ENCODE measurements at regions of chr14 and their contacts with region 1.

Region 1: GRCh38 chr14:43647302-43647701 is 859.8 kb downstream of the FSCB start:
- DNase-seq: peak in 1 of 2 experiments; percentile 10
- H3K4me3 ChIP-seq: no peak overlapping the region
- H3K4me3 Mint-ChIP-seq: no peak overlapping the region
- H3K27ac Mint-ChIP-seq: no peak overlapping the region
- H3K4me1 ChIP-seq: peaks cover 12% of the 10 kb centered on the region
- H3K4me1 Mint-ChIP-seq: peaks cover 12% of the 10 kb centered on the region
- H3K27me3 ChIP-seq: no peaks in the 10 kb centered on the region
- H3K27me3 Mint-ChIP-seq: no peaks in the 10 kb centered on the region
- CTCF ChIP-seq: no peak

Region 2: DNA sequence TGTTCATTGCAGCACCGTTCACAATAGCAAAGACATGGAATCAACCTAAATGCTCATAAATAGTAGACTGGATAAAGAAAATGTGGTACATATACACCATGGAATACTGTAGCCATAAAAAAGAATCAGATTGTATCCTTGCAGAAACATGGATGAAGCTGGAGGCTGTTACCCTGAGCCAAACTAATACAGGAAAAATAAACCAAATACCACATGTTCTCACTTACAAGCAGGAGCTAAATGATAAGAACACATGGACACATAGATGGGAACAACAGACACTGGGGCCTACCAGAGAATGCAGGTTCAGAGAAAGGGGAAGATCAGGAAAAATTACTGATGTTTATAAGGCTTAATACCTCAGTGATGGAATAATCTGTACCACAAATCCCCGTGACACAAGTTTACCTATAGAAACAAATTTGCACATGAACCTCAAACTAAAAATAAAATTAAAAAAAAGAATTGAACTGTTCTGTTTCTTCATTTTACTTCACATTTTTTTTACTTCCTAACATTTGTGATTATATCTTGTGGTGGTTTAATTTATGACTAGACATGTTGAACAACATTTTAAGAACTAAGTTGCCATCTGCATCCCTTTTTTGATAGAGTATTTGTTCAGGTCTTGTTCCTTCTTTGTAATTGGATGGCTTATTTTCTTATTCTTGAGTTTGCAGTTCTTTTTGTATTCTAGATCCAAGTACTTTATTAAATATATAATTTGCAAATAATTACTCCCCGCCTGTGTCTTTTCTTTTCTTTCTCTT is 24.6 kb after region 1 on chr14:
- CTCF ChIA-PET with region 1: no interaction called
- POLR2A ChIA-PET with region 1: no interaction called
- intact Hi-C with region 1: loop called (anchors 1 kb)
- DNase-seq: no peak
- H3K4me3 ChIP-seq: no peak overlapping the region
- H3K4me3 Mint-ChIP-seq: no peak overlapping the region
- H3K27ac Mint-ChIP-seq: no peak overlapping the region
- H3K4me1 ChIP-seq: no peaks in the 10 kb centered on the region
- H3K4me1 Mint-ChIP-seq: no peaks in the 10 kb centered on the region
- H3K27me3 ChIP-seq: no peaks in the 10 kb centered on the region
- H3K27me3 Mint-ChIP-seq: no peaks in the 10 kb centered on the region
- CTCF ChIP-seq: no peak

Region 3: GRCh38 chr14:43778686-43779639 is 131.7 kb after region 1 on chr14:
- CTCF ChIA-PET with region 1: interaction called, 3 read pairs
- POLR2A ChIA-PET with region 1: no interaction called
- intact Hi-C with region 1: loop called (anchors 1 kb)
- DNase-seq: no peak
- H3K4me3 ChIP-seq: no peak overlapping the region
- H3K4me3 Mint-ChIP-seq: no peak overlapping the region
- H3K27ac Mint-ChIP-seq: no peak overlapping the region
- H3K4me1 ChIP-seq: peaks cover 15% of the 10 kb centered on the region
- H3K4me1 Mint-ChIP-seq: peaks cover 19% of the 10 kb centered on the region
- H3K27me3 ChIP-seq: no peaks in the 10 kb centered on the region
- H3K27me3 Mint-ChIP-seq: no peaks in the 10 kb centered on the region
- CTCF ChIP-seq: no peak

Region 4: GRCh38 chr14:43795600-43796228 is 148.4 kb after region 1 on chr14:
- CTCF ChIA-PET with region 1: no interaction called
- POLR2A ChIA-PET with region 1: no interaction called
- intact Hi-C with region 1: loop called (anchors 1 kb)
- DNase-seq: peak in 1 of 2 experiments; percentile 7
- H3K4me3 ChIP-seq: no peak overlapping the region
- H3K4me3 Mint-ChIP-seq: no peak overlapping the region
- H3K27ac Mint-ChIP-seq: no peak overlapping the region
- H3K4me1 ChIP-seq: no peaks in the 10 kb centered on the region
- H3K4me1 Mint-ChIP-seq: no peaks in the 10 kb centered on the region
- H3K27me3 ChIP-seq: no peaks in the 10 kb centered on the region
- H3K27me3 Mint-ChIP-seq: no peaks in the 10 kb centered on the region
- CTCF ChIP-seq: peak; percentile 16 to 40

Region 5: GRCh38 chr14:43887523-43887922 is 240.2 kb after region 1 on chr14:
- CTCF ChIA-PET with region 1: no interaction called
- POLR2A ChIA-PET with region 1: no interaction called
- intact Hi-C with region 1: no loop called
- DNase-seq: no peak
- H3K4me3 ChIP-seq: no peak overlapping the region
- H3K4me3 Mint-ChIP-seq: no peak overlapping the region
- H3K27ac Mint-ChIP-seq: no peak overlapping the region
- H3K4me1 ChIP-seq: no peaks in the 10 kb centered on the region
- H3K4me1 Mint-ChIP-seq: no peaks in the 10 kb centered on the region
- H3K27me3 ChIP-seq: no peaks in the 10 kb centered on the region
- H3K27me3 Mint-ChIP-seq: no peaks in the 10 kb centered on the region
- CTCF ChIP-seq: no peak

Measured in Caco-2 (cell line).